IMR-90 (cell line): ENCODE measurements at regions of chr10 and their contacts with region 1.

Region 1: GRCh38 chr10:117167789-117168674 is 29.3 kb upstream of the KCNK18 start:
- DNase-seq: peak; percentile 10
- ATAC-seq: peak; percentile 90
- H3K4me3 ChIP-seq: no peak overlapping the region
- H3K27ac ChIP-seq: no peak overlapping the region
- H3K4me1 ChIP-seq: no peaks in the 10 kb centered on the region
- H3K27me3 ChIP-seq: peaks cover 78% of the 10 kb centered on the region
- CTCF ChIP-seq: peak; percentile 63
- POLR2A ChIP-seq: no peak
- RAD21 ChIP-seq: peak; percentile 40

Region 2: GRCh38 chr10:116796910-116797513 is 371.0 kb before region 1 on chr10:
- CTCF ChIA-PET with region 1: interaction called, 12 read pairs
- POLR2A ChIA-PET with region 1: no interaction called
- dilution Hi-C with region 1: no loop called
- in situ Hi-C with region 1: loop called (anchors 5 kb)
- intact Hi-C with region 1: loop called (anchors 1 kb)
- DNase-seq: peak; percentile 61
- ATAC-seq: peak; percentile 96
- H3K4me3 ChIP-seq: no peak overlapping the region
- H3K27ac ChIP-seq: no peak overlapping the region
- H3K4me1 ChIP-seq: no peaks in the 10 kb centered on the region
- H3K27me3 ChIP-seq: peaks cover 13% of the 10 kb centered on the region
- CTCF ChIP-seq: peak; percentile 94
- POLR2A ChIP-seq: peak; percentile 46; the same call in 1 of the 2 replicates
- RAD21 ChIP-seq: peak; percentile 96

Region 3: GRCh38 chr10:116836902-116837523 is 331.0 kb before region 1 on chr10:
- CTCF ChIA-PET with region 1: no interaction called
- POLR2A ChIA-PET with region 1: no interaction called
- dilution Hi-C with region 1: no loop called
- in situ Hi-C with region 1: no loop called
- intact Hi-C with region 1: loop called (anchors 2 kb)
- DNase-seq: no peak
- ATAC-seq: no peak
- H3K4me3 ChIP-seq: no peak overlapping the region
- H3K27ac ChIP-seq: no peak overlapping the region
- H3K4me1 ChIP-seq: no peaks in the 10 kb centered on the region
- H3K27me3 ChIP-seq: peaks cover 33% of the 10 kb centered on the region
- CTCF ChIP-seq: peak; percentile 40
- POLR2A ChIP-seq: no peak
- RAD21 ChIP-seq: peak; percentile 53

Region 4: DNA sequence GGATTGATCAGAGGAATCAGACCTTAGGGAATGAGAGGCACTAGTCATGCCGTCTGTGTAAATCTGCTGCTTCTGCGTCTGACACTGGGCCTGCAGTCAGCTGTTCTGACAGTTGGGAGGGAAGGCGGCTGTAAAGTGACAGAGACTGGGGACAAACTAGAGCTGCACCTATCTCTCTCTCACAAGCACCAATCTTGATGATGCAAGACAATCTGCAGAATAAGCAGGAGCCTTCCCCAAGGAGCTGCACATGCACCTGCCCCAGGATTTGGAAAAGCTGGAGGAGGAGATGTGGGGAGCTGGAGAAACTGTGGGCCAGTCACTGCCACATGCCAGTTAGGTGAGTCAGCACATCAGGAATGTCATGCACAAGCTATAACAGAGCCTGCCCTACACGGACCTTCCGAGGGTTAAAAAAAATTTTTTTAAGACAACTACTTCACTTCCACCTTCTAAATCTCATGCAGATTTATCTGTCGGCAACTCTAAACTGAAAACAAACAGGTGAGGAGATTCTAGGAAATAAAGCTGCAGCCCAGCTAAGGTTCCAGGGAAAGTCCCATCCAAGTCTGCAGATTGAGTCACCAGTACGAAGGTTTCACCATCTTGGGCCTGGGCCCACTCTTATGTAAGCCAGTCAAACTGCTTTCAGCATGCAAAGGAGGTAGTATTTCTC is 279.5 kb before region 1 on chr10:
- CTCF ChIA-PET with region 1: no interaction called
- POLR2A ChIA-PET with region 1: no interaction called
- dilution Hi-C with region 1: no loop called
- in situ Hi-C with region 1: no loop called
- intact Hi-C with region 1: loop called (anchors 5 kb)
- DNase-seq: peak; percentile 89
- ATAC-seq: peak; percentile 85
- H3K4me3 ChIP-seq: no peak overlapping the region
- H3K27ac ChIP-seq: no peak overlapping the region
- H3K4me1 ChIP-seq: peaks cover 7% of the 10 kb centered on the region
- H3K27me3 ChIP-seq: no peaks in the 10 kb centered on the region
- CTCF ChIP-seq: no peak
- POLR2A ChIP-seq: no peak
- RAD21 ChIP-seq: no peak

Region 5: GRCh38 chr10:117005027-117005526 is 163.0 kb before region 1 on chr10 and contains the start of gene SHTN1:
- CTCF ChIA-PET with region 1: no interaction called
- POLR2A ChIA-PET with region 1: no interaction called
- dilution Hi-C with region 1: no loop called
- in situ Hi-C with region 1: no loop called
- intact Hi-C with region 1: loop called (anchors 10 kb)
- DNase-seq: peak; percentile 50
- ATAC-seq: peak; percentile 66
- H3K4me3 ChIP-seq: peak within 1 kb of the TSS; percentile 75
- H3K27ac ChIP-seq: no peak within 1 kb of the TSS; the same call in 1 of the 2 replicates
- H3K4me1 ChIP-seq: no peaks in the 10 kb centered on the region; the same call in 1 of the 2 replicates
- H3K27me3 ChIP-seq: no peaks in the 10 kb centered on the region
- CTCF ChIP-seq: no peak
- POLR2A ChIP-seq: no peak
- RAD21 ChIP-seq: no peak
- total RNA-seq, gene SHTN1: 0.54 and 1.4 TPM in 2 replicates